ENCODE measurements at regions of chr17 and their contacts with region 1.

Region 1: GRCh38 chr17:38351412-38352222 is at the start of gene SOCS7:
- DNase-seq: peak; percentile 84 to 95 (median 92)
- H3K4me3 ChIP-seq: peak within 1 kb of the TSS; percentile 71 to 95 (median 88)
- H3K27ac ChIP-seq: peak within 1 kb of the TSS; percentile 11 to 95 (median 85)
- H3K27me3 ChIP-seq: no peaks in the 10 kb centered on the region
- CTCF ChIP-seq: peak in 36 of 56 donors; percentile 7 to 55 (median 31)
- total RNA-seq, gene SOCS7: 34.3 to 82.0 (median 51.3) TPM

Region 2: GRCh38 chr17:36601303-36602029 is 1750.2 kb before region 1 on chr17 and contains the start of gene MRM1:
- intact Hi-C with region 1: loop called in 1 of 2 experiments (anchors 10 kb)
- DNase-seq: peak; percentile 89 to 95 (median 94)
- H3K4me3 ChIP-seq: peak within 1 kb of the TSS; percentile 61 to 100 (median 96)
- H3K27ac ChIP-seq: peak within 1 kb of the TSS in 56 of 59 donors; percentile 9 to 88 (median 76)
- H3K27me3 ChIP-seq: no peaks in the 10 kb centered on the region
- CTCF ChIP-seq: peak in 53 of 56 donors; percentile 23 to 74 (median 57)
- total RNA-seq, gene MRM1: 4.4 to 12.1 (median 8.0) TPM

Region 3: DNA sequence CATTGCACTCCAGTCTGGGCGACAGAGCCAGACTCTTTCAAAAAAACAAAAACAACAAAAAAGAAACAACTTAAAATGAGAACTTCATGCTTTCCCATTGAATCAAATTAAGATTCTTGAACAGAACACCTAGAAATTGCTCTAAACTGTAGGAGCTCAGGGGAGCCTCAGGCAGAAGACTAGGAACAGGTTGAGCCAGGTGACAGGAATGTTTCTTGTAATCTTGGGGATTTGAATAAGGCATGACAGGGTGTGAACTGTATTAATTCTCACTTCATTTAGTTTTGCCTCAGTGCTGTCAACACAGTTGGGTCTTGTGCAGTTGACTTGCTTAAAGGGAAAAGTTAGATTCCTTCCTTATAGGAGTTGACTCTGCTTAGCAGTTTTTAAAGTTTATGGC is 27.8 kb after region 1 on chr17:
- intact Hi-C with region 1: no loop called
- DNase-seq: no peak
- H3K4me3 ChIP-seq: no peak overlapping the region
- H3K27ac ChIP-seq: no peak overlapping the region
- H3K27me3 ChIP-seq: no peaks in the 10 kb centered on the region
- CTCF ChIP-seq: no peak

Region 4: GRCh38 chr17:38415250-38416194 is 63.9 kb after region 1 on chr17:
- intact Hi-C with region 1: loop called (anchors 2 kb)
- DNase-seq: peak in 3 of 10 donors; percentile 48 to 79 (median 58)
- H3K4me3 ChIP-seq: peak overlapping the region in 56 of 59 donors; percentile 12 to 63 (median 39)
- H3K27ac ChIP-seq: peak overlapping the region; percentile 2 to 95 (median 75)
- H3K27me3 ChIP-seq: peaks cover 0 to 3% (median 0%) of the 10 kb centered on the region in 45 donors
- CTCF ChIP-seq: no peak

Region 5: GRCh38 chr17:38464723-38465390 is 113.2 kb after region 1 on chr17:
- intact Hi-C with region 1: no loop called
- DNase-seq: peak; percentile 82 to 93 (median 92)
- H3K4me3 ChIP-seq: peak overlapping the region; percentile 25 to 67 (median 53)
- H3K27ac ChIP-seq: peak overlapping the region; percentile 62 to 98 (median 93)
- H3K27me3 ChIP-seq: no peaks in the 10 kb centered on the region
- CTCF ChIP-seq: peak in 1 of 56 donors; percentile 15

Measured in dorsolateral prefrontal cortex (tissue), 120 donors.